ENCODE measurements at regions of chr1 and their contacts with region 1.

Region 1: GRCh38 chr1:224851210-224851847 is 78.1 kb upstream of the DNAH14 start:
- DNase-seq: peak; percentile 9 to 24
- ATAC-seq: peak in 1 of 2 donors; percentile 58
- H3K4me3 ChIP-seq: no peak overlapping the region
- H3K27ac ChIP-seq: no peak overlapping the region
- H3K4me1 ChIP-seq: no peaks in the 10 kb centered on the region
- H3K27me3 ChIP-seq: no peaks in the 10 kb centered on the region
- CTCF ChIP-seq: peak; percentile 9 to 54 (median 38)
- POLR2A ChIP-seq: no peak

Region 2: DNA sequence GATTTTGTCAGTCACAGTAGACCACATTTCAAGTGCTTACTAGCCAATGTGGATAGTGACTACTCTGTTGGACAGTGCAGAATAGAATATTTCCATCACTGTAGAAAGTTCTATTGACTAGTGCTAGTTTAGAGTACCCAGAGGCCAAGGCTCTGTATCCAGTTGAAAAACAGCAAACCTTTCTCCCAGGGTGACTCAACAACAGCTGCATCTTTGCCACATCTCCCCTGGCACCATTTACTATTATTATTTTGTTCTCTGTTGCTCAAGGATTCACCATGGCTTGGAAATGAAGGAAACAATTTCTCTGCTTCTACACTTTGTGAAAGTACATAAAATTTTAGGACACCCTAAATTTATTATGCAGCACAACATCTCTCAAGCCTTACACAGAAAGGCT is 331.5 kb before region 1 on chr1:
- in situ Hi-C with region 1: loop called in 2 of 4 experiments (anchors 5 to 10 kb)
- intact Hi-C with region 1: loop called (anchors 1 kb)
- DNase-seq: no peak
- ATAC-seq: no peak
- H3K4me3 ChIP-seq: no peak overlapping the region
- H3K27ac ChIP-seq: no peak overlapping the region
- H3K4me1 ChIP-seq: no peaks in the 10 kb centered on the region
- H3K27me3 ChIP-seq: no peaks in the 10 kb centered on the region
- CTCF ChIP-seq: no peak
- POLR2A ChIP-seq: no peak

Region 3: GRCh38 chr1:224644553-224645154 is 206.7 kb before region 1 on chr1:
- in situ Hi-C with region 1: loop called in 1 of 4 experiments (anchors 10 kb)
- intact Hi-C with region 1: loop called (anchors 5 kb)
- DNase-seq: no peak
- ATAC-seq: peak; percentile 64 to 69
- H3K4me3 ChIP-seq: no peak overlapping the region
- H3K27ac ChIP-seq: no peak overlapping the region
- H3K4me1 ChIP-seq: no peaks in the 10 kb centered on the region
- H3K27me3 ChIP-seq: no peaks in the 10 kb centered on the region
- CTCF ChIP-seq: peak; percentile 70 to 81 (median 80)
- POLR2A ChIP-seq: no peak